Activated B cell treated with CpG ODN at 0.5 μM for 24 hours (primary cell): ENCODE measurements at regions of chr12 and their contacts with region 1.

Region 1: GRCh38 chr12:94149119-94149780 is 873 bp downstream of the PLXNC1 start:
- DNase-seq: peak; percentile 71
- ATAC-seq: peak; percentile 29
- H3K4me3 Mint-ChIP-seq: peak overlapping the region; percentile 96
- H3K27ac Mint-ChIP-seq: peak overlapping the region; percentile 70
- H3K4me1 Mint-ChIP-seq: peaks cover 58% of the 10 kb centered on the region
- H3K27me3 Mint-ChIP-seq: no peaks in the 10 kb centered on the region
- CTCF ChIP-seq: no peak

Region 2: GRCh38 chr12:93571925-93572711 is 577.1 kb before region 1 on chr12 and contains the start of gene SOCS2:
- CTCF ChIA-PET with region 1: no interaction called
- POLR2A ChIA-PET with region 1: no interaction called
- intact Hi-C with region 1: no loop called
- DNase-seq: peak; percentile 37
- ATAC-seq: peak; percentile 13
- H3K4me3 Mint-ChIP-seq: peak within 1 kb of the TSS; percentile 84
- H3K27ac Mint-ChIP-seq: peak within 1 kb of the TSS; percentile 24
- H3K4me1 Mint-ChIP-seq: peaks cover 17% of the 10 kb centered on the region
- H3K27me3 Mint-ChIP-seq: peaks cover 37% of the 10 kb centered on the region
- CTCF ChIP-seq: no peak
- total RNA-seq, gene SOCS2: 2.3 and 2.8 TPM in 2 replicates

Region 3: DNA sequence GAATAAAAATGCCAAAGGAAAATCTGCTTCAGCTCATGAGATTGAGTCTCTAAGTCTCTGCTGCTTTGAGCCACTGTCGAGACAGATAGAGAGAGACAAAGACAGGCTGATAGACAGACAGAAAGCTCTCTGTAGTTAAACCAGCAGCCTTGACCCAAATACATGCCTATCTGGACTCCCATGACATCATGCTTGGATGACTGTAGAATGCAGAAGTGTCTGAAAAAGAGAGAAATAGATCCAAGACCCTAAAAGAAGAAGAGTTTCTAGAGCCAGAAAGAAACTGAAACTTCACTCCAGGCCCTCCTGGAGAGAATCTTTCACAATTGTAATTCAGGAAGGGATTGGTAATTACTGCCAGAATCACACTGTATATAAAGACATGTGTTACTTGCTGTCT is 123.5 kb before region 1 on chr12:
- CTCF ChIA-PET with region 1: no interaction called
- POLR2A ChIA-PET with region 1: no interaction called
- intact Hi-C with region 1: no loop called
- DNase-seq: no peak
- ATAC-seq: no peak
- H3K4me3 Mint-ChIP-seq: no peak overlapping the region
- H3K27ac Mint-ChIP-seq: no peak overlapping the region
- H3K4me1 Mint-ChIP-seq: peaks cover 1% of the 10 kb centered on the region
- H3K27me3 Mint-ChIP-seq: peaks cover 11% of the 10 kb centered on the region
- CTCF ChIP-seq: no peak

Region 4: GRCh38 chr12:94165163-94165562 is 15.9 kb after region 1 on chr12:
- CTCF ChIA-PET with region 1: no interaction called
- POLR2A ChIA-PET with region 1: no interaction called
- intact Hi-C with region 1: loop called (anchors 2 kb)
- DNase-seq: no peak
- ATAC-seq: no peak
- H3K4me3 Mint-ChIP-seq: no peak overlapping the region
- H3K27ac Mint-ChIP-seq: no peak overlapping the region
- H3K4me1 Mint-ChIP-seq: peaks cover 17% of the 10 kb centered on the region
- H3K27me3 Mint-ChIP-seq: no peaks in the 10 kb centered on the region
- CTCF ChIP-seq: no peak

Region 5: DNA sequence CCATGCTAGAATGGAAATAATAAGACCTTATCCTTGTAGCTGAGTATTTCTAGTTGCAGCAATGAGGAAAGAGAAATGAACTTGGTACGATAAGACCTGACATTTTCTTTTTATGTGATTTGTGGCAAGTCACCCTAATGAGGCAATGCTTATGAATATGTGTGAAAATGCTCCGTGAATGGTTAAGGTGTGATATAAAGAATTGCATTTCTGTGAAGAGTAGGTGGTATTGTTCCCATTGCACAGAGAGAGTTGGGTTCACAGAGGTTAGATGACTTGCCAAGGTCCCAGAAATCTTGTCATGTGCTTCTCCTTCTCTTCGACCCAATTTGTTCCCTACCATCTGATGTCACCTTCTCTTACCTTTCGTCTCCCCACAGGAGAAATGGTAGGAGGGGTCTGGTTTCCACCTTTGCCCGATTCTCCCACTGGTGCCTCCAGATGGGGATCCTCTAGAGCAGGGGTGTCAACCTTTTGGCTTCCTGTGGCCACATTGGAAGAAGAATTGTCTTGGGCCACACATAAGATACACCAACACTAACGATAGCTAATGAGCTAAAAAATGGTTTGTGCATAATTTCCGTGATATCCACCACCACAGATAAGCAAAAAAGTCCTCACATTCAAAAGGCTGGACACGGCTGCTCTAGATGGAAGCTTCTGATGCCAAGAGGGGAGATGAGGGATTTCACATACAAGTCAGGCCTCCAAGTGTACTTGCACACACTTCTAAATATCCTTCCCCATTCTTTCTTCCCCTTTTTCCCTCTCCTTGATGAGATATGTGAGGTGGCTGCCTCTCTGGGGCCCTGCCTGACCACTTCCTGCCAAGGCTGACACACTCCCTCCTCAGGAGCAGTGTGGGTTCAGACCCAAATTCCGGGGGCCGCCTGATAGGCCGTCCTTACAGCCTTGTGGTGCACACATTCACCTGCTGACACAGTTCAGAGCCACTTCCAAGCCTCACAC is 95.2 kb after region 1 on chr12:
- CTCF ChIA-PET with region 1: no interaction called
- POLR2A ChIA-PET with region 1: interaction called, 11 read pairs
- intact Hi-C with region 1: loop called (anchors 1 kb)
- DNase-seq: peak; percentile 28
- ATAC-seq: peak; percentile 22
- H3K4me3 Mint-ChIP-seq: peak overlapping the region; percentile 13
- H3K27ac Mint-ChIP-seq: peak overlapping the region; percentile 72
- H3K4me1 Mint-ChIP-seq: peaks cover 66% of the 10 kb centered on the region
- H3K27me3 Mint-ChIP-seq: no peaks in the 10 kb centered on the region
- CTCF ChIP-seq: no peak

Region 6: DNA sequence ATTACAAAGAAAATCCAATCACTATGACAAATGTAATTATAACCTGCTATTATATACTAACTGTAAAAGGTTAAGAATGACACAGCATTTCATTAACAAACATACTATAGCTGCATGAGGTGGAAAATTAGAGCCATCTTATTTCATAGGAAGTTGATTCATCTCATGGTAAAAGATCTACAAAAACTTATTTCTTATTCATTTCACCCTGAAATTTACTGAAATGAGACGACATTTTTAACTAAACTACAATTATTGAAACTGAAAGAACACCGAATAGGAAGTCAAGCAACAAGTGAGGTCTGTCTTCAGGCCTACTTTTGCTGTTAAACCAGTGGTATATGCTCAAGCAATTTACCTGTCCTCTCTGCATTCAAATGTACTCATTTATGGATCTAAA is 223.2 kb after region 1 on chr12:
- CTCF ChIA-PET with region 1: no interaction called
- POLR2A ChIA-PET with region 1: no interaction called
- intact Hi-C with region 1: loop called (anchors 5 kb)
- DNase-seq: no peak
- ATAC-seq: peak; percentile 56
- H3K4me3 Mint-ChIP-seq: no peak overlapping the region
- H3K27ac Mint-ChIP-seq: peak overlapping the region; percentile 76
- H3K4me1 Mint-ChIP-seq: peaks cover 11% of the 10 kb centered on the region
- H3K27me3 Mint-ChIP-seq: no peaks in the 10 kb centered on the region
- CTCF ChIP-seq: no peak

Region 7: DNA sequence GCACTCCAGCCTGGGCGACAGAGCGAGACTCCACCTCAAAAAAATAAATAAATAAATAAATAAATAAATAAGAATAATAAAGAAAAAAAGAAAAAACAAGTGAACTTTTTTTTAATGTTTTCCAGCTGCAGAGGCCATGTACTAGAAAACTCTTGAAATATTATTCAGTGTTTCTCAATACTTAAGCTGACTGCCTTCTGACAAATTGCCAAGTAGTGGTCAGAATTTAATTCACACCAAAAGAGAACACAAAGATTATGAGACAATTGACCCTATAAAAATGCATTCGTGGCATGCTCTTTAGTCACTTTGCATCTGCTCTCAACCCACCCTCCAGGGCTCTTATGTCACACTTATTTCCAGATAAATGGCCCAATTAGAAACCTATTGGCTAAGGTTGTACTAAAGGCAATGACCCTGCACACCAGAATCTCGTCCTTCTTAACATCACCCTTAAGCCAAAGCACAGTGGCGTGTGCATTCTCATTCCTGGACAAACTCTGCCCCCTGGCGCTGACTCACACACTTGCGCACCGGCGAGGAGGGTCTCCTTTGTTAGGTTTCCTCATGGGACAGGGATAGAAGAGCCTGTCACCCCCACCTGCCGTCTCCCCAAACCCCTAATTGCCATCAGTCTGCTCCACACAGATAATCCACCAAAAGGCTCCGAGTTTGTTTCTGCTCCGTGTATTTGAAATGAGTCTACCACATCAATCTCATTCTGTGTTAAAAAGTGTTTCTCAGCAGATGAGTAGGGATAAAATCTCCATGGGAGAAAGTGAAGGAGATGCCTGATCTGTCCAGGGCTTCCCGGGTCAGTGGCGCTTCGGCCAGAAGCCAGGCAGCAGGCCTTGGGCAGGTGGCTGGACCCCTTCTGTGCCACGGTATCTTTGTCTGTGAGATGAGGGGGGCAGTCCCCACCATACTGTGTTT is 383.5 kb after region 1 on chr12:
- CTCF ChIA-PET with region 1: interaction called, 11 read pairs
- POLR2A ChIA-PET with region 1: no interaction called
- intact Hi-C with region 1: loop called (anchors 1 kb)
- DNase-seq: peak; percentile 63
- ATAC-seq: peak; percentile 88
- H3K4me3 Mint-ChIP-seq: no peak overlapping the region
- H3K27ac Mint-ChIP-seq: no peak overlapping the region
- H3K4me1 Mint-ChIP-seq: peaks cover 5% of the 10 kb centered on the region
- H3K27me3 Mint-ChIP-seq: peaks cover 9% of the 10 kb centered on the region
- CTCF ChIP-seq: no peak